Activated CD4-positive, alpha-beta memory T cell treated with anti-CD3 and anti-CD28 coated beads for 36 hours (primary cell): ENCODE measurements at regions of chr4 and their contacts with region 1.

Region 1: GRCh38 chr4:17038510-17039176 is 140.2 kb upstream of the LDB2 start:
- DNase-seq: no peak
- H3K4me3 Mint-ChIP-seq: no peak overlapping the region
- H3K27ac Mint-ChIP-seq: no peak overlapping the region
- H3K4me1 Mint-ChIP-seq: no peaks in the 10 kb centered on the region
- H3K27me3 Mint-ChIP-seq: peaks cover 4% of the 10 kb centered on the region

Region 2: DNA sequence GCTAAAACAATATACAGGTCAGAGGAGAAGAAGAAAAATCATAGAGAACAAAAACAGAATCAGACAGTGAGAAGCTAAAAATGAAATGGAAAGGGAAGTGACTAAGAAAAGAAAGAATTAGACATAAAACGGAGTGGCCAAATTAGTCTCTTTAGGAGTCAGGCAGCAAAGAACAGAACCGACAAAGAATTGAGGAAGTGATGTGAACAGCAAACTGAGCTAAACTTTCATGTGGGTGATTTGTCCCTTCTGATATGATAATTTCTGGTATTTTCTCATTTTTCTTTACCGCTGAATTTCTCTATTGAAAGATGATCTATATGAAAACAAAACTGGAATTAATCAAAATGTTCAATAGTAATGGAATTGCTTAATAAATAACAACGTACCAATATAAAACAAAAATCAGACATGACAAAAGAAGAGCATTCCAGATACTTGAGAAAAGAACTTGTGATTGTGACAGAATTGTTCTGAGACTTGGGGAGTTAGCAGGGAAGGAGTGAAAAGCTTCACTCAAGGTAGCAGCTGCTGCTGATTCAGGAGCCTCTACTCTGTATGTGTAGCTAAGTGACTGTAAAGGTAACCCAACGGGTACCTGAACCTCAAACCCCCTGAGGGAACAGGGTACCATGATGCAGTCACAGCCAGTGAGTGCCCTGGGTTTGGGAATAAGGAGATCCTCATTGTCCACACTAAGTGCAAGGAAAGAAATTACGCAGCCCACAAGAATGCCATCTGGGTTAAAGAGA is 821.2 kb before region 1 on chr4:
- CTCF ChIA-PET with region 1: no interaction called
- POLR2A ChIA-PET with region 1: no interaction called
- intact Hi-C with region 1: loop called (anchors 5 kb)
- DNase-seq: no peak
- H3K4me3 Mint-ChIP-seq: peak overlapping the region; percentile 13
- H3K27ac Mint-ChIP-seq: peak overlapping the region; percentile 47
- H3K4me1 Mint-ChIP-seq: peaks cover 69% of the 10 kb centered on the region
- H3K27me3 Mint-ChIP-seq: no peaks in the 10 kb centered on the region

Region 3: GRCh38 chr4:17112292-17112659 is 73.6 kb after region 1 on chr4:
- CTCF ChIA-PET with region 1: no interaction called
- POLR2A ChIA-PET with region 1: no interaction called
- intact Hi-C with region 1: no loop called
- DNase-seq: peak; percentile 10
- H3K4me3 Mint-ChIP-seq: no peak overlapping the region
- H3K27ac Mint-ChIP-seq: no peak overlapping the region
- H3K4me1 Mint-ChIP-seq: no peaks in the 10 kb centered on the region
- H3K27me3 Mint-ChIP-seq: peaks cover 3% of the 10 kb centered on the region